Mammary epithelial cell (primary cell): ENCODE measurements at regions of chr3 and their contacts with region 1.

Region 1: DNA sequence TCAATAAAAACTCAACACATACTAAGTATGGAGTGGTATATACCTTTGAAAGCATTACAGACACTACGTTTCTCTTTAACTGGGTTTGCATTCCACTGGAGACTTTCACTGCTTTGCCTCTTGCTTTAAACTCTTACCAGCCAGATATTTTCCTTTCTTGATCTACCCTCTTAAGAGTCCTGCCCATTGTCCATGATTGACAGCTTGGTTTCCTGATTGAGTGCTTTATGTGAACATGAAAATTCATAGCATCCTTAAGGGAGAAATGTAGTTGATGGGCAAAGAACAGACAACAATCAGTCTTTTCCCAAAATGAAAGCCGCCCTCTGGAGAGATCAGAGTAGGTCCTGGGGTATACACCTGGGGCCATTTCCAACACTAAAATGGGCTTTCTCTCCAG is 78.6 kb downstream of the PTPRG start:
- DNase-seq: no peak
- H3K4me3 ChIP-seq: no peak overlapping the region
- H3K27ac ChIP-seq: no peak overlapping the region
- H3K4me1 ChIP-seq: peaks cover under 1% of the 10 kb centered on the region
- H3K27me3 ChIP-seq: no peaks in the 10 kb centered on the region
- CTCF ChIP-seq: no peak

Region 2: GRCh38 chr3:61574854-61575253 is 65.1 kb before region 1 on chr3:
- CTCF ChIA-PET with region 1: no interaction called
- dilution Hi-C with region 1: loop called (anchors 5 kb)
- in situ Hi-C with region 1: no loop called
- intact Hi-C with region 1: no loop called
- DNase-seq: peak; percentile 61
- H3K4me3 ChIP-seq: no peak overlapping the region
- H3K27ac ChIP-seq: no peak overlapping the region
- H3K4me1 ChIP-seq: peaks cover 12% of the 10 kb centered on the region
- H3K27me3 ChIP-seq: no peaks in the 10 kb centered on the region
- CTCF ChIP-seq: no peak

Region 3: DNA sequence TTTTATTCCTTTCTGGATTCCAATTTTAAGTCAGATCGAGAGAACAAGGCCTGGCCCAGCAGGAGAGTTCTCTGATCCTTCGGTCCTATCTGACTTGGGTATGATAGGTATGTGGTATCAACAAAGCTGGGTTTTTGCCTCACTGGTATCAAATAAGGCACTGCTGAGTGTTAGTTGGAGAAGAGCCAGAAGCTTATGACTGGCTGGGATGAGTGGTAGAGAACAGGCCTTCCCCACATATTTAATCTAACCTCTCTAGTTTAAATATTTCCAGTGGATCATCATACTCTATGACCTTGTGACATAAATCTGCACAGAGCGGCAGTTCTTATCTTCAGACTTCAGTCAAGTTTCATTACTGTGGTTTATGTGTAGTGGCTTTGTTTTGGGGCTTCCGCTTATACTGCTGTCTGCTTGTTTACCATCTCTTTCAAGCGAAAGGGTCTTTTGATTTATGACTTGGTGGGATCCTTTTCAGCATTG is 85.9 kb after region 1 on chr3:
- CTCF ChIA-PET with region 1: no interaction called
- dilution Hi-C with region 1: no loop called
- in situ Hi-C with region 1: no loop called
- intact Hi-C with region 1: no loop called
- DNase-seq: peak; percentile 17
- H3K4me3 ChIP-seq: no peak overlapping the region
- H3K27ac ChIP-seq: no peak overlapping the region
- H3K4me1 ChIP-seq: no peaks in the 10 kb centered on the region
- H3K27me3 ChIP-seq: no peaks in the 10 kb centered on the region
- CTCF ChIP-seq: no peak